ENCODE measurements at regions of chr22 and their contacts with region 1.

Region 1: GRCh38 chr22:26428515-26429457 is at the start of gene ASPHD2:
- DNase-seq: peak; percentile 66 to 88 (median 82)
- H3K4me3 ChIP-seq: peak within 1 kb of the TSS; percentile 50 to 78 (median 57)
- H3K4me3 Mint-ChIP-seq: peak within 1 kb of the TSS; percentile 92 to 99
- H3K27ac ChIP-seq: peak within 1 kb of the TSS; percentile 85 to 86
- H3K27ac Mint-ChIP-seq: peak within 1 kb of the TSS; percentile 90 to 98 (median 97)
- H3K4me1 ChIP-seq: peaks cover 52 to 53% of the 10 kb centered on the region in 2 donors
- H3K4me1 Mint-ChIP-seq: peaks cover 53% of the 10 kb centered on the region
- H3K27me3 ChIP-seq: no peaks in the 10 kb centered on the region
- H3K27me3 Mint-ChIP-seq: peaks cover 3 to 5% (median 4%) of the 10 kb centered on the region in 3 donors
- CTCF ChIP-seq: no peak
- polyA plus RNA-seq, gene ASPHD2: 2.6 to 6.2 (median 4.1) TPM

Region 2: DNA sequence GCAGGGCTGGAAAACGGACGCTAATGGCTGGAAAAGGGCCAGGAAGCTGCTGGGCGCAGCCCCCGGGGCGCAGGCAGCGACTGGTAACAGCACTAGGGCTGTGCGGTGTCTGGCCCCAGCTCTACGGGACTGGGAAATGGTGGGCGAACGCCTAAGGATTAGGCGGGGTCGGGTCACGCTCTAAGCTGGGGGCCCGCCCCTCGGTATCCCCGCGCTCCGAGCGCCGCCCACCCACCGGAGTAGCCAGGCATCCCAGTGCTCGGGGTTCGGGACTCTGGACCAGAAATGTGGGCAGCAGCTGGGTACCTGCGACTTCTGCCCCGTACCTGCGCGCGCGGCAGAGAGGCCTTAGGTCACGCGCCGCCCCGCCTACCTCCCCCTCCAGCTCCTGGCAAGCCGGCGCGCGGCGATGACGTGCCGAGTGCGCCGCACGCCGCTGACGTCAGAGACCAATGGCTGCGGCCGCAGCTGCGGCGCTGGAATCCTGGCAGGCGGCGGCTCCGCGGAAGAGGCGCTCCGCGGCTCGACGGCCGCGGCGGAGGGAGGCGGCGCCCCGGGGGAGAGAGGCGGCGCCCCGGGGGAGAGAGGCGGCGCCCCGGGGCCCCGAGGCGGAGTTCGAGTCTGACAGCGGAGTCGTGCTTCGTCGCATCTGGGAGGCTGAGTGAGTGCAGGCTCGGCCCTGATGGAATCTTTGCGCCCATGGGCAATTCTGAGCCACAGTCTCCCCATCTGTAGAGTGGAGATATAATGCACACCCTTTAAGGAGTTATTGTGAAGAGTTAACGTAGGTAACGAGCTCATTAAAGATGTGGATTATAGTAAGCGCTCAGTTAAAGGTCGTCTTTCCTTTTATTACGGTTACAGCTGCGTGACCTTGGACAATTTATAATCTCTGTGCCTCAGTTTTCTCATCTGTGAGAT is 54.9 kb after region 1 on chr22 and contains the starts of genes HPS4 and SRRD:
- intact Hi-C with region 1: loop called in 1 of 2 experiments (anchors 5 kb)
- DNase-seq: peak; percentile 90 to 91 (median 91)
- H3K4me3 ChIP-seq: peak within 1 kb of the TSS; percentile 70 to 96 (median 88)
- H3K4me3 Mint-ChIP-seq: peak within 1 kb of the TSS; percentile 83 to 94
- H3K27ac ChIP-seq: peak within 1 kb of the TSS; percentile 76 to 98
- H3K27ac Mint-ChIP-seq: peak within 1 kb of the TSS; percentile 93 to 98 (median 97)
- H3K4me1 ChIP-seq: peaks cover 54 to 59% of the 10 kb centered on the region in 2 donors
- H3K4me1 Mint-ChIP-seq: peaks cover 61% of the 10 kb centered on the region
- H3K27me3 ChIP-seq: no peaks in the 10 kb centered on the region
- H3K27me3 Mint-ChIP-seq: no peaks in the 10 kb centered on the region
- CTCF ChIP-seq: no peak
- polyA plus RNA-seq, gene HPS4: 5.7 to 21.6 (median 7.5) TPM
- polyA plus RNA-seq, gene SRRD: 3.7 to 15.0 (median 10.0) TPM